Activated T-helper 1 cell treated with anti-CD3 and anti-CD28 coated beads, Interleukin-12 subunit alpha, Interleukin-12 subunit beta, Interleukin-2, Interleukin-4 antibody, amounts not matched to agents 30 ng/mL and 10 ng/mL and 1 ng/mL, durations not matched to agents 14 hours and 24 hours and 36 hours (primary cell): ENCODE measurements at regions of chr2 and their contacts with region 1.

Region 1: DNA sequence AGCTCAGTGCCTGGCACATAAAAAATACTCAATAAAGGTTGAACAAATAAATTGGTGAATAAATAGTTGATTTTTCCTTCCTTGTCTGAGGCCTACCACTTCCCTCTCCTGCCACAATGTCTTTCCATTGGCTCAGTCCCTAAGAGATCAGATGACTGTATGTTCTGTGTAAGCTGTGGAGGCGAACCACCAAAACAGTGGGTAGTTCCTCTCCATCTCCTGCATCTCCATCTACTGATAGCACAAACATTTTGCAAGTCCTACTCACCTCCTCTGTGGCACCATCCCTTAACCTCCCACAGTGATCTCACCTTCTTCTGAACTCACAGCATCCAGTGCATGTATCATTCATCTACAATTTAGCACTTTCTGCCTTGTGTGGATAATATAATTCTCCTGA is 50.2 kb downstream of the PCBP1 start:
- DNase-seq: no peak
- H3K4me3 Mint-ChIP-seq: peak overlapping the region; percentile 61
- H3K27ac Mint-ChIP-seq: peak overlapping the region; percentile 86
- H3K4me1 Mint-ChIP-seq: peaks cover 66% of the 10 kb centered on the region
- H3K27me3 Mint-ChIP-seq: no peaks in the 10 kb centered on the region

Region 2: DNA sequence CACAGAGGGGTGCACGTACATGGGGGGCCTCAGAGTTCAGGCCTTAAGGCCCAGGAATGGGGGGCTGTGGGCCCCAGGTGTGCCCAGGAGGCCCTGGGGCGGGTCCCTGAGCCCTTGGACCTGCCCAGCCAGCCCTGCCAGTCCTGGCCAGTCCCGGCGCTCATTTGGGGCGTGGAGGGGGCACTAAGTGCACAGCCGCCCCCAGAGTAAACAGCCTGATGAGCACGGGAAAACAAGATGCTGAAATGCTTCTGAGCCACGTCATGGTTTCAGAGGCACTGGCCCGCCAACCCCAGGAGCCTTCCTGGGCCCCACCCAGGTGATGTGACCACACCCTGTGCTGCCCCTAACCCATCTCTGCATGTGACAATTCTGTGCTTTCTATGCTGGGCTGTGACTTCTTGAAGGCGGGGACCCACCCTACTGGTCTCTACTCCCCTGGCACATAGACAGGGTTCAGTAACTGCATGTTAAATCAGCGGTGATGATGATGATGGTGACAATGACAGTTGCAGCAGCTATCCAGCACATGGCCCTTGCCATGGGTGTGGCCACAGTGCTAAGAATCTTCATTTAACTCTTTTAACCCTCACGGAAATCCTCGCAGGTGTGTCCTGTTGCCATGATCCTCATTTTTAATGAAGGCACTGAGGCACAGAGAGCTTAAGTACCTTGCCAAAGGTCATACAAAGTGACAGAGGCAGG is 147.9 kb before region 1 on chr2:
- intact Hi-C with region 1: loop called (anchors 1 kb)
- DNase-seq: no peak
- H3K4me3 Mint-ChIP-seq: no peak overlapping the region
- H3K27ac Mint-ChIP-seq: no peak overlapping the region
- H3K4me1 Mint-ChIP-seq: peaks cover 12% of the 10 kb centered on the region
- H3K27me3 Mint-ChIP-seq: no peaks in the 10 kb centered on the region

Region 3: GRCh38 chr2:70104231-70105111 is 33.0 kb before region 1 on chr2:
- intact Hi-C with region 1: loop called (anchors 1 kb)
- DNase-seq: no peak
- H3K4me3 Mint-ChIP-seq: peak overlapping the region; percentile 79
- H3K27ac Mint-ChIP-seq: peak overlapping the region; percentile 87
- H3K4me1 Mint-ChIP-seq: peaks cover 42% of the 10 kb centered on the region
- H3K27me3 Mint-ChIP-seq: no peaks in the 10 kb centered on the region

Region 4: GRCh38 chr2:70124983-70125480 is 12.5 kb before region 1 on chr2:
- intact Hi-C with region 1: loop called (anchors 1 kb)
- DNase-seq: peak; percentile 42
- H3K4me3 Mint-ChIP-seq: peak overlapping the region; percentile 93
- H3K27ac Mint-ChIP-seq: peak overlapping the region; percentile 99
- H3K4me1 Mint-ChIP-seq: peaks cover 78% of the 10 kb centered on the region
- H3K27me3 Mint-ChIP-seq: no peaks in the 10 kb centered on the region

Region 5: DNA sequence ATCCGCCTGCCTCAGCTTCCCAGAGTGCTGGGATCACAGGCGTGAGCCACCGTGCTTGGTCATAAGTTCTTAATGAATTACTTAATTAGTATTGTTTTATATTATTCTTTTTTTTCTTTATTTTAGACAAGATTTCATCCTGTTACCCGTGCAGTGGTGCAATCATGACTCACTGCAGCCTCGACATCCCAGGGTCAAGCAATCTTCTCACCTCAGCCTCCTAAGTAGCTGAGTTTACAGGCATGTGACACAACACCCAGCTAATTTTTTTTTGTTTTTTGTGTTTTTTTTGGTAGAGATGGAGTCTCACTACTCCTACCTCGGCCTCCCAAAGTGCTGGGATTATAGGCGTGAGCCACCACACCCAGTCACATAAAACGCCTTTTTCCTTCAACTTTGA is 36.0 kb after region 1 on chr2:
- intact Hi-C with region 1: no loop called
- DNase-seq: no peak
- H3K4me3 Mint-ChIP-seq: no peak overlapping the region
- H3K27ac Mint-ChIP-seq: no peak overlapping the region
- H3K4me1 Mint-ChIP-seq: no peaks in the 10 kb centered on the region
- H3K27me3 Mint-ChIP-seq: no peaks in the 10 kb centered on the region